Cardiac septum (tissue), 1 donor: ENCODE measurements at regions of chr12 and their contacts with region 1.

Region 1: GRCh38 chr12:75658901-75659383 is 147.5 kb upstream of the KRR1 start:
- DNase-seq: no peak

Region 2: GRCh38 chr12:75699728-75700496 is 41.0 kb after region 1 on chr12:
- intact Hi-C with region 1: loop called (anchors 5 kb)
- DNase-seq: no peak